ENCODE measurements at regions of chr1 and their contacts with region 1.

Region 1: GRCh38 chr1:83931658-83932253 is 67.2 kb downstream of the TTLL7 start:
- DNase-seq: peak in 1 of 3 donors; percentile 60
- ATAC-seq: peak; percentile 49
- H3K4me3 ChIP-seq: no peak overlapping the region
- H3K4me1 ChIP-seq: no peaks in the 10 kb centered on the region
- CTCF ChIP-seq: peak; percentile 31

Region 2: DNA sequence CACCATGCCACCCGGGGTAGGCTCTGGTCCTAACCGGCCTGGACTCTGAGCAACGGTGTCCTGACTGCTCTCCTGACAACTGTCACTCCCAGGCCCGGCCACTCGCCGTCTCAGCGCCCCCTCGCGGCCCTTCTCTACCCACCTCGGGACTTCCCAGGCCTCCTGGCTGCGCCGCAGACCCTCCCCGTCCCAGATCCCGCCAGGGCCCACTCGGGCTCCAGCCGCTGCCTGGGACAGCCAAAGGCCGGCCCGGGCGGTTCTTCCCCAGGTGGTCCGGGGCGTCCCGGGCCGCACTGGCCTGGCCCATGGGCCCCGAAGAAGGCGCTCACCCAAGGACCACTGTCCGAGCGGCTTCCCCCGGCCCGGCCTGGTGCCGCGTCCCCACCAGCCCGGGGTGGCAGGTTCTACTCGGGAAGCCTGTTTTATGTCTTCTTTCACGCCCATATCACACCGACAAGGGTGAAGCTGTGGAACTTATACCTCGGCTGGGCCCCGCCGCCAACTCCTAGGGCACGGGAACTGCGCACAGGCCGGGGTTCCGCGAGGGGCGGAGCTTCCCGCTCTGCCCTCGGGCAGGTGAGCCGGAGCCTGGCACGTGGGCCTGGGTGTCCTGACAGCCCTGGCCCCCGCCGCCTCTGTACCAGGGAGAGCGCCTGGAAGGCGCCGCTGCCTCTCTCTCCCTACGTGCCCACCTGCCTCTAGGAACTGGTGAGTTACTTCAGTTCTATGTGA is 71.1 kb before region 1 on chr1:
- intact Hi-C with region 1: no loop called
- DNase-seq: peak; percentile 87 to 93 (median 91)
- ATAC-seq: peak; percentile 99
- H3K4me3 ChIP-seq: peak overlapping the region; percentile 27
- H3K4me1 ChIP-seq: no peaks in the 10 kb centered on the region
- CTCF ChIP-seq: peak; percentile 66

Region 3: GRCh38 chr1:84122780-84123382 is 191.1 kb after region 1 on chr1:
- intact Hi-C with region 1: loop called (anchors 2 to 10 kb)
- DNase-seq: peak in 2 of 3 donors; percentile 34 to 89
- ATAC-seq: peak; percentile 54
- H3K4me3 ChIP-seq: no peak overlapping the region
- H3K4me1 ChIP-seq: no peaks in the 10 kb centered on the region
- CTCF ChIP-seq: no peak

Region 4: DNA sequence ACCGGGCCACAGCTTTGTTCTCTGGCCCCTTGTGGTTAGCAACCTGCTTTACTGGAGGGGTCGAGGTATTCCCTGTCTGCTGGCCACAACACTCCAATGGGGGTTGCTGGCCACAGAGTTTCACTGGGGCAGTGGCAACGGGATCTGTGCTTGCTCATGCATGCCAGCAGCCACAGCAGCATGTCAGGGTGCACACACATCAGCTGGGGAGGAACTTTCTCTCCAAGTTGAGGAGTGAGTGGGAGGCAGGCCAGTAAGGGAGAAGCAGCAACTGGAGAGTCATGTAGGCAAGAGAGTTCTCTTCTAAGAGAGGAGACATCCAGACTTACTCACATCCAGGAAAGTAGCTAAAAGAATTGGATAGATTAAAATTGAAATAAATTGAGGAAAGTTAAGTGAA is 407.7 kb after region 1 on chr1:
- intact Hi-C with region 1: no loop called
- DNase-seq: no peak
- ATAC-seq: no peak
- H3K4me3 ChIP-seq: no peak overlapping the region
- H3K4me1 ChIP-seq: no peaks in the 10 kb centered on the region
- CTCF ChIP-seq: no peak

Region 5: GRCh38 chr1:84427520-84428188 is 495.9 kb after region 1 on chr1:
- intact Hi-C with region 1: loop called in 1 of 2 experiments (anchors 10 kb)
- DNase-seq: no peak
- ATAC-seq: peak; percentile 71
- H3K4me3 ChIP-seq: no peak overlapping the region
- H3K4me1 ChIP-seq: no peaks in the 10 kb centered on the region
- CTCF ChIP-seq: no peak